Tibial artery (tissue), 4 donors: ENCODE measurements at regions of chr1 and their contacts with region 1.

Region 1: DNA sequence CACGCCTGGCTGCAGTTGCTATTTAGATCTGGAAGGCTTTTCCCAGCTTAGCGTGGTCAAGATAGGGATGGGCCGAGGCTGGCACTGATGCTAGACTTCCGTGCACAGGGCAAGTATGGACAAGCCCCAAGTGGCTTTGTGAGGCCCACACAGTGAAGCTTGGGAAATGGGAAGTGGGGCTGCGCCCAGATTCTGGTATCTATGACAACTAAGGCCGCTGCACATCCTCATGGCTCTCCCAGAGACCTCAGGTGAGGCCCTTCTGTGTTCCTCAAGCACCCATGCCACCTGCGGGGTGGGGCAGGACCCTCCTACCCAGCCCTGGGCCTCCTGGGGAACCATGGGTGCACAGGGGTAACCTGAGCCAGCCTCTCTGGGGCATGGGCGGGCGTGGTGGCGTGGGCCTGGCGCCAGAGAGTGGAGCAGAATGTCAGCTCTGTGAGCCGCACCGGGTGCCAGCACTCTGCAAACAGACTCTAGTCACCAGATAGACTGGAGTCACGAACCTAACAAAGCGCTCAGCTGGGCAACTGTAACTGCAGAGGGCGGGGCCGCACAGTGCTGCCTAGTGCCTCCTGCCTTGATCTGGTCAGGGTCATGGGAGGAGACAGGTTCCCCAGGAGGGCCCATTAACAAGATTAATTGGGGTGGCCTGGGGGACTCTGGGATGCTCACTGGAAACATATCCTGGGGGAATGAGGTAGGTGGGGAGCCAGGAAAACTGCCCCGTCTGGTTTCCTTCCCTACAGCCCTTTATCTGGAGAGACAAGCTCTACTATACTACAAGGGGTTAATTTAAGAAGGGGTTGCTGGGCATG is 46.5 kb downstream of the ELF3 start:
- DNase-seq: no peak
- H3K4me3 ChIP-seq: no peak overlapping the region
- H3K27ac ChIP-seq: no peak overlapping the region
- H3K4me1 ChIP-seq: no peaks in the 10 kb centered on the region
- H3K27me3 ChIP-seq: no peaks in the 10 kb centered on the region
- CTCF ChIP-seq: no peak

Region 2: DNA sequence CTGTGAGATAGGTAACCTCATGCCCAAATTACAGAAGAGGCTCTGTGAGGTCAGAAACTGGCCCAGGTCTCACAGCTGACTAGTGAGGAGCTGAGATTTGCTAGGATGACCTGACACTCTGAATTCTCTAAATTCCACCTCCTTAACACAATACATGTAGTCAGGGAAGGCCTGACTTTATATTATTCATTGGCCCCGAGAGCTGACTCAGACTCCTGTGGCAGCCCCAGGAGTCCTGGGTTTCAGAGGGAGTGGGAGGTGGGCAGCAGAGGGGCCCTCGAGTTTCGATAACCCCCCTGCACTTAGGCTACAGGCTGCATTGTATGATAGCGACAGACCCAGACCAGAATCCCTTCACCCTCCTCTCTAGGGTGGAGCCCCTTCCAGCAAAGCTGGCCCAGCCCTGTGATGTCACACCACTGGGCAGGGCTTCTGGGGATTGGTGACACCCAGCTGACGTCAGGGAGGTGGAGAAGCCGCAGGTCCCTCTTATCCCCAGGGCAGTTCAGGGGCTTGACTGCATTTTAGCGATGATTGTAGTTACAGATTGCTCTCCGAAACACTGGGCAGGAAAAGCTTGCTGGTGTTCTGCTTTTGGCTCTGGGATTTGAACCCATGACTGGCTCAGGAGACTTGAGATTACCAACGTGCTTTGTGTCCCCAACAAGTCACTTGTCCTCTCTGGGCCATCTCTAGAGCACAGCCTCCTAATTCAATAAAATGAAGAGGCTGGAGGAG is 48.9 kb after region 1 on chr1:
- intact Hi-C with region 1: loop called (anchors 10 kb)
- DNase-seq: no peak
- H3K4me3 ChIP-seq: no peak overlapping the region
- H3K27ac ChIP-seq: no peak overlapping the region
- H3K4me1 ChIP-seq: peaks cover 0 to 7% (median 0%) of the 10 kb centered on the region in 4 donors
- H3K27me3 ChIP-seq: no peaks in the 10 kb centered on the region
- CTCF ChIP-seq: no peak